ENCODE measurements at regions of chr2 and their contacts with region 1.

Region 1: DNA sequence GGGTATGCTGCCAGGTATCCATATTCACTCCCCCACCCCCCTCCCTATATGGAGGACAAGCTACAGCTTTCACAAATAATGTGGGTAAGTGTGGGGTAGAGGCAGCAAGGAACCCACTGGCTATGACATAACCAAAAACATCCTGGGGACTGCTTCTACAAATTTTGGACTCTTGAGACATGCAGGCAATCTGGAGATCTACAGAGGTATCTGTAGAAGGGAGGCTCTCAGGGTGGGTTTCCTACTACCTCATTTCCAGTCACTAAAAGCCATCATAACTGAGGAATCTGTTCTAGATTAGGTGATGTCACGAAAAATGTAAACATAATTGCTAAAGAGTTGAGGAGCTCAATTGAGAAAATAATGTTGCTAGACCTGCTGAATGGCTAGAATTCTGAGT is 46.8 kb upstream of the WIPF1 start:
- DNase-seq: no peak
- ATAC-seq: no peak
- H3K4me3 Mint-ChIP-seq: no peak overlapping the region
- H3K27ac Mint-ChIP-seq: no peak overlapping the region
- H3K4me1 Mint-ChIP-seq: peaks cover 14% of the 10 kb centered on the region
- H3K27me3 Mint-ChIP-seq: no peaks in the 10 kb centered on the region
- CTCF ChIP-seq: no peak

Region 2: DNA sequence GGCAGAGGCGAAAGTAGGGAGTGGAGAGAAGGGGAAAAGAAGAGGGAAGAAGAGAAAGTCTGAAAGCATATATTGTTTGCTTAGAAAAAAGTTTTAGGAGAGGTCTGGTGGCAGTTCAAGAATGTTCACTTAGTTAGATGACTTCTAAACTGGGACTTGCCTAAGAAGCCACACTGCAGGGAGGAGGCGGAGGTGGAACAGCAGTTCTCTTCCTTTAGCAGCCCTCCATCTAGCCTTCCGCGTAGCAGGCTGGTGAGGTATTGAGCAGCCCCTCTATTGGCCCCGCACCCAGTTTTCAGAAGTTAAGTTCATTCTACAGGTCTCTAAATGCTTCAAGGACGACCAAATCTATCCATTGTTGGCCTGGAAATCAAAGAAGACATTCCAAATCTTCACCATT is 14.9 kb before region 1 on chr2:
- CTCF ChIA-PET with region 1: no interaction called
- POLR2A ChIA-PET with region 1: no interaction called
- intact Hi-C with region 1: no loop called
- DNase-seq: peak; percentile 53
- ATAC-seq: no peak
- H3K4me3 Mint-ChIP-seq: peak overlapping the region; percentile 85
- H3K27ac Mint-ChIP-seq: peak overlapping the region; percentile 99
- H3K4me1 Mint-ChIP-seq: peaks cover 64% of the 10 kb centered on the region
- H3K27me3 Mint-ChIP-seq: no peaks in the 10 kb centered on the region
- CTCF ChIP-seq: no peak

Region 3: DNA sequence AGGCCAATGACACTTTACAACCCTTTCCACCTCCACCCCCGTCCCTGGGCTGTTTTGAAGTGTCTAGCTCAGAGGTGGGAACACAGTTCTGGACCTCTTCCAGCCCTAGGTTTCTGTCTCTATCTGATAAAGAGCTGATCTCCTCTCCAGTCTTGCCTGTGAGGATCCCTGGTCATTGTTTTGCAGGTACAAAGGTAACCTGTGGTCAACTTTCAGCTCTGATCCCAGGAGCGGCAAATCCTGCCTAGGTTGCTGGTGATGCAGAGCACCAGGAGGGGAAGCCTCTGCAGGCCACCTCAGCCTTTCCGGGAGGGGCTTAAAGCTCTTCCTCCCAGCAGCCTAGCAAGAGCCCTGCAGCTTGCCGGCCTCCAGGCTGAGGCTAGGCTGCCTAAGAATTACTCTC is 23.0 kb after region 1 on chr2:
- CTCF ChIA-PET with region 1: interaction called, 4 read pairs
- POLR2A ChIA-PET with region 1: interaction called, 12 read pairs
- intact Hi-C with region 1: no loop called
- DNase-seq: no peak
- ATAC-seq: peak; percentile 67
- H3K4me3 Mint-ChIP-seq: no peak overlapping the region
- H3K27ac Mint-ChIP-seq: peak overlapping the region; percentile 13
- H3K4me1 Mint-ChIP-seq: peaks cover 30% of the 10 kb centered on the region
- H3K27me3 Mint-ChIP-seq: no peaks in the 10 kb centered on the region
- CTCF ChIP-seq: no peak

Region 4: GRCh38 chr2:174717273-174717672 is 72.9 kb after region 1 on chr2:
- CTCF ChIA-PET with region 1: no interaction called
- POLR2A ChIA-PET with region 1: no interaction called
- intact Hi-C with region 1: no loop called
- DNase-seq: peak; percentile 28
- ATAC-seq: peak; percentile 59
- H3K4me3 Mint-ChIP-seq: no peak overlapping the region
- H3K27ac Mint-ChIP-seq: no peak overlapping the region
- H3K4me1 Mint-ChIP-seq: peaks cover 26% of the 10 kb centered on the region
- H3K27me3 Mint-ChIP-seq: peaks cover 1% of the 10 kb centered on the region
- CTCF ChIP-seq: no peak

Region 5: GRCh38 chr2:174729797-174730697 is 85.6 kb after region 1 on chr2:
- CTCF ChIA-PET with region 1: no interaction called
- POLR2A ChIA-PET with region 1: no interaction called
- intact Hi-C with region 1: no loop called
- DNase-seq: peak; percentile 71
- ATAC-seq: peak; percentile 90
- H3K4me3 Mint-ChIP-seq: peak overlapping the region; percentile 78
- H3K27ac Mint-ChIP-seq: peak overlapping the region; percentile 62
- H3K4me1 Mint-ChIP-seq: peaks cover 20% of the 10 kb centered on the region
- H3K27me3 Mint-ChIP-seq: peaks cover 10% of the 10 kb centered on the region
- CTCF ChIP-seq: no peak